Heart right ventricle (tissue), 16 donors: ENCODE measurements at regions of chr7 and their contacts with region 1.

Region 1: GRCh38 chr7:2760098-2760889 is 72.3 kb downstream of the AMZ1 start:
- DNase-seq: peak; percentile 52 to 79
- ATAC-seq: peak; percentile 68 to 86 (median 76)
- H3K4me3 ChIP-seq: peak overlapping the region in 5 of 10 donors; percentile 11 to 27 (median 22)
- H3K27ac ChIP-seq: peak overlapping the region; percentile 52 to 99 (median 91)
- H3K4me1 ChIP-seq: peaks cover 30 to 80% (median 71%) of the 10 kb centered on the region in 9 donors
- H3K27me3 ChIP-seq: no peaks in the 10 kb centered on the region
- CTCF ChIP-seq: peak in 7 of 9 donors; percentile 35 to 65 (median 54)

Region 2: DNA sequence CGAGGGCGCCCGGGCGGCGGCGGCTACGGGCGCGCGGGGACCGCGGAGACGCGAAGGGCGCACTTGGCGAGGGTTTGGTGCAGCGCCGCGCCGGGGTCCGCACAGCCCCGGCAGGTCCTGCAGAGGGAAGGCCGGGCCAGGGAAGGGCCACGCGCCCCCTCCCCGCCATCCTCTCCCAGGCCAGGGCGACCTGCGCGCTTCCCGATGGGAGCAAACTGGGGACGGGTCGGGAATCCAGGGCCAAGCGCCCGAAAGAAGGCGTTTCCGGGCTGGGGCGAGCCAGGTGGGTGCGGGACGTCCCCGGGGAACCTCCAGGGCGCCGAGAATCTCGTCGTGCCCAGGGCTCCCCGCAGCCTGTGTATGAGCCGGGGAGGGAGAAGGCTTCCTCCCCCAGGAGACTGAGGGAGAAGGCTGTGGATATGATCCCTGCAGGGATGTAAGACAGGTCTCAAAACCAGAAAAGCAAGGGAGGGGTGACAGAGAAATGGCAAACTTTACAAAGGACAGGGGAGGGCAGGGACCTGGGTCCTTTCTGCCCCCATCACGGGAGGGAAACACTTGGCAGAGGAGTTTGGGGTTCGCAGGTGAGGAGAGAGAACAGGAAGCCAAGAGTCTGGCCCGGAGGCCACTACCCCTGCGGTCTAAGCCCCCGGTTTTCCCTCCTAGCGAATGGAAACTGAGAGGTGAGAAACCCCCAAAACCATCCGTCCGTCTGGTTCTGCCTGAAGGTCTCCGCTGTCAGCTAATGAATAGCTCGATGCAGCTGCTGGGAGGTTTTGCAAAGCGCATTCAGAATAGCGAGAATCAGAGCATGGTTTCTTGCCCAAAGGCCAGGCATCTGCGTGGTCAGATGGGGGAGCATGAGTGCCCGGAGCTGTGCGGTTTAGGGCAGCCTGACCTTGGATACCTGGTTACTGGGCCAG is 71.6 kb before region 1 on chr7:
- intact Hi-C with region 1: no loop called
- DNase-seq: no peak
- ATAC-seq: peak in 2 of 8 donors; percentile 4 to 23
- H3K4me3 ChIP-seq: peak overlapping the region in 9 of 10 donors; percentile 12 to 45 (median 31)
- H3K27ac ChIP-seq: no peak overlapping the region
- H3K4me1 ChIP-seq: peaks cover 7 to 33% (median 17%) of the 10 kb centered on the region in 9 donors
- H3K27me3 ChIP-seq: peaks cover 0 to 60% (median 52%) of the 10 kb centered on the region in 7 donors
- CTCF ChIP-seq: no peak

Region 3: GRCh38 chr7:2800931-2801688 is 40.8 kb after region 1 on chr7:
- intact Hi-C with region 1: loop called in 5 of 10 experiments (anchors 2 to 5 kb)
- DNase-seq: peak; percentile 55 to 73
- ATAC-seq: peak in 2 of 8 donors; percentile 13 to 19
- H3K4me3 ChIP-seq: no peak overlapping the region
- H3K27ac ChIP-seq: peak overlapping the region in 8 of 10 donors; percentile 47 to 84 (median 77)
- H3K4me1 ChIP-seq: peaks cover 18 to 85% (median 57%) of the 10 kb centered on the region in 9 donors
- H3K27me3 ChIP-seq: no peaks in the 10 kb centered on the region
- CTCF ChIP-seq: no peak

Region 4: DNA sequence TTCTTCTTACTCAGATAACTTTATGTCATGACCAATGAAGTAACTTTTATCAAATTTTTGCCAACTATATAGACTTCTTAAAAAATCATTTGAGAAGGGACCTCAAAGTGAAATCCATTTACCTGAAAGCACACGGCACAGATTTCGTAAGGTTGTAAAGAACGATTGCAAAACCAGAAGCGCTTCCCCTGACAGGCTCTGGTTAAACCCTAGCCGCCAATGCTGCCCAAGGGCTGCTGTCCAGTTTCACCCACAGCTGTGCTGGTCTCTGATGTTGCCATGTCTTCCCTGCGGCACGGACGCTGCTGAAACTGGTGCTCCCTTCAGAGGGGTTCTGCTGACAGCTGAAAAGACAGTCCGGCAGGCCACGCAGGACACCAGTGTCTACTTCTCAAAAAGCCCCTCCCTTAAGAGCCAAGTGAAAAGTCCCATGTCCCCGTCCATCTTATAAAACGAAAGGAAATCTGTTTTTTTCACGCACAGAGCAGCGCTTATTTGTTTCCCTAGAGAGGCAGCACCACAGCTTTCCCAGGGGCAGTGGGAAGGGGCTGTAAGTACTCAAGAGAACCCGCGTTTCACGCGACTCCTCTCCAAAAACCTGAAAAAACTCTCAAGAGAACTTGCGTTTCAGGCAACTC is 51.3 kb after region 1 on chr7:
- intact Hi-C with region 1: loop called in 1 of 10 experiments (anchors 5 kb)
- DNase-seq: peak in 1 of 2 donors; percentile 42
- ATAC-seq: peak; percentile 27 to 54 (median 44)
- H3K4me3 ChIP-seq: peak overlapping the region in 8 of 10 donors; percentile 7 to 41 (median 29)
- H3K27ac ChIP-seq: peak overlapping the region; percentile 50 to 91 (median 77)
- H3K4me1 ChIP-seq: peaks cover 9 to 73% (median 58%) of the 10 kb centered on the region in 9 donors
- H3K27me3 ChIP-seq: no peaks in the 10 kb centered on the region
- CTCF ChIP-seq: no peak

Region 5: GRCh38 chr7:2821161-2821841 is 61.0 kb after region 1 on chr7:
- intact Hi-C with region 1: loop called in 2 of 10 experiments (anchors 5 kb)
- DNase-seq: no peak
- ATAC-seq: peak in 1 of 8 donors; percentile 16
- H3K4me3 ChIP-seq: no peak overlapping the region
- H3K27ac ChIP-seq: peak overlapping the region in 8 of 10 donors; percentile 11 to 73 (median 56)
- H3K4me1 ChIP-seq: peaks cover 19 to 88% (median 75%) of the 10 kb centered on the region in 9 donors
- H3K27me3 ChIP-seq: no peaks in the 10 kb centered on the region
- CTCF ChIP-seq: peak in 1 of 9 donors; percentile 11

Region 6: DNA sequence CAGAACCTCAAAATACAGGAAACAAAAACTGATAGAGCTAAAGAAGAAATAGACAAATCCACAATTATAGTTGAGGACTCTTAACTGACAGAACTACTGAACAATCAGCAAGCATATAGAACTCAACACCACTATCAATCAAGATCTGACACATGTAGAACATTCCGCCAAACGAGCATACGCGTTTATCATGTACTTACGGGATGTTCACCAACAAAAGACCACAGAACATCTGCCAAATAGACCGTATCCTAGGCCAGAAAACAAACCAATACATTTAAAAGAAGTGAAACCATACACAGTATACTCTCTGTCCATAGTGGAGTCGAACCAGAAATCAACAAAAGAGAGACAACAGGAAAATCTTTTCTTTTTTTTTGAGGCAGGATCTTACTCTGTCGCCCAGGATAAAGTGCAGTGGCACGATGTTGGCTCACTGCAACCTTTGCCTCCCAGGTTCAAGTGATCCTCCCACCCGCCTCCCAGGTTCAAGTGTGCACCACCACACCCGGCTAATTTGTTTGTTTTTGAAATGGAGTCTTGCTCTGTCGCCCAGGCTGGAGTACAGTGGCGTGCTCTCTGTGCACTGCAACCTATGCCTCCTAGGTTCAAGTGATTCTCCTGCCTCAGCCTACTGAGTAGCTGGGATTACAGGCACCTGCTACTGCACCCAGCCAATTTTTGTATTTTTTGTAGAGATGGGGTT is 78.7 kb after region 1 on chr7:
- intact Hi-C with region 1: loop called in 5 of 10 experiments (anchors 2 to 10 kb)
- DNase-seq: no peak
- ATAC-seq: no peak
- H3K4me3 ChIP-seq: no peak overlapping the region
- H3K27ac ChIP-seq: peak overlapping the region in 1 of 10 donors; percentile 19
- H3K4me1 ChIP-seq: peaks cover 4 to 67% (median 51%) of the 10 kb centered on the region in 9 donors
- H3K27me3 ChIP-seq: no peaks in the 10 kb centered on the region
- CTCF ChIP-seq: no peak

Region 7: DNA sequence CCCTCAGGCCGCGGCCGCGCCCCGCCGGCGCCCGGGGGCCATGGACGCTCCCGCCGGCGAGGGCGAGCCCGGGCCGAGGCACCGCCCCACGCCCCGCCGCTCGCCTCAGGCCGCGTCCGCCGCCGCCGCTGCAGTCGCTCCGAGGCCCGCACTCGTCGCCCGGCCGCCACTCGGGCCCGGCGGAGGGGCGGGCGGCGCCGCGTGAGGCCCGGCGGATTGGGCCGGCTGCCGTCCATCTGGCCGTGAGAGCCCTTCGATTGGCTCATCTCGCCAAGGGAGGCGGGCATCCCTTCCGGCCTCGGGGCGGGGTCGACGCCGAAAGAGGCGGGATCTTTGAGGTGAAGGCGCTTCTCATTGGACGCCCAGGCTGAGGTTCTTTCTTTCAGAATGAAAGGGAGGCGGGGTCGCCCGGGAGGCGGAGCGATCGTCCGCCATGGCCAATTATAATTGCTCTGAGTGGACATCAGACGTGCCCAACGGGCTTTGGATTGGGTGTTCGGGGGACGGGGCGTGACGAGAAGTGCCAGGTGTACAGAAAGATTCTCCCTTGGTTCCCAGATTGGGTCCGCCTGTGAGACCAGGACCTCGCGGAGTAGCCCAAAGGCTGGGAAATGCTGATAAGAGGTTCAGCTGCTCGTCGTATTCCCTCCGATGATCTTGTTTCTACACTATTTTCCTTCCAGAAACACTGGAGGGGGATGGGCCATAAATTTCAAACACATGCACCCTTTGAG is 84.0 kb after region 1 on chr7 and contains the start of gene GNA12:
- intact Hi-C with region 1: loop called in 5 of 10 experiments (anchors 2 to 10 kb)
- DNase-seq: peak; percentile 98
- ATAC-seq: peak; percentile 96 to 99 (median 98)
- H3K4me3 ChIP-seq: peak within 1 kb of the TSS; percentile 72 to 87 (median 78)
- H3K27ac ChIP-seq: peak within 1 kb of the TSS; percentile 32 to 77 (median 68)
- H3K4me1 ChIP-seq: peaks cover 4 to 49% (median 32%) of the 10 kb centered on the region in 9 donors
- H3K27me3 ChIP-seq: no peaks in the 10 kb centered on the region
- CTCF ChIP-seq: no peak
- total RNA-seq, gene GNA12: 25.0 to 46.4 (median 34.5) TPM

Region 8: DNA sequence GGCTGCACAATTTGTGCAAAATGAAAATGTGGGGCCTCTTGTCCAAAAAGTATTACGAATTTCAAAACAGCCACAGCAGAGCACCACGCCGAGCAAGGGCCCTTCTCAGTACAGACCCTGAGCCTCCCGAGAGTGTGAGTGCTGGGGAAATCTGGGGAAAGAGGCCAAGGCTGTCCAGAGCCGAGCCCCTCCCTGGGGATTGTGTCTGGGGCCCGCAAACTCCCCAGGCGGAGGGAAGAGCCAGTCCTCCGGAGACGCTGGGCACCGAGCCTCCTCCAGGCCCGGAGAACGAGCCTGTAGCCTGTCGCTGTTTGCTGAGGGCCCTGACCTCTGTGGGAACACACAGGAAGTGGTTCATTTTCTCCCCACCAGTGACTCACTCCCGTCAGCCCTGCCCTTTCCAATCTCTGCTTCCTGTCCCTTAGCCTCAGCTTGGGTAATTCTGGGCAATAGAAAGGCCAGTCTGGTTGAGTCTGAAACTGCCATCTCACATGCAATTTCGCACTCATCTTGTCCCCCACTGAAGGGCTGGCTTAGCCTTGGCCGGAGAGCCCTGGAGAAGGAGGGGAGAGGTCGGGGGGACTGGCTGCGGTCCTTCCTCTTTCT is 103.3 kb after region 1 on chr7:
- intact Hi-C with region 1: loop called in 1 of 10 experiments (anchors 5 kb)
- DNase-seq: peak; percentile 81 to 84
- ATAC-seq: peak; percentile 93 to 97 (median 94)
- H3K4me3 ChIP-seq: peak overlapping the region in 6 of 10 donors; percentile 16 to 29 (median 24)
- H3K27ac ChIP-seq: peak overlapping the region; percentile 64 to 96 (median 88)
- H3K4me1 ChIP-seq: peaks cover 0 to 31% (median 20%) of the 10 kb centered on the region in 9 donors
- H3K27me3 ChIP-seq: no peaks in the 10 kb centered on the region
- CTCF ChIP-seq: no peak

Region 9: GRCh38 chr7:2886900-2887299 is 126.6 kb after region 1 on chr7:
- intact Hi-C with region 1: no loop called
- DNase-seq: peak in 1 of 2 donors; percentile 45
- ATAC-seq: peak in 7 of 8 donors; percentile 42 to 82 (median 68)
- H3K4me3 ChIP-seq: no peak overlapping the region
- H3K27ac ChIP-seq: no peak overlapping the region
- H3K4me1 ChIP-seq: no peaks in the 10 kb centered on the region
- H3K27me3 ChIP-seq: peaks cover 0 to 4% (median 0%) of the 10 kb centered on the region in 7 donors
- CTCF ChIP-seq: peak; percentile 20 to 66 (median 55)

Region 10: GRCh38 chr7:3028071-3028757 is 267.9 kb after region 1 on chr7:
- intact Hi-C with region 1: no loop called
- DNase-seq: no peak
- ATAC-seq: peak in 3 of 8 donors; percentile 40 to 73 (median 61)
- H3K4me3 ChIP-seq: no peak overlapping the region
- H3K27ac ChIP-seq: no peak overlapping the region
- H3K4me1 ChIP-seq: peaks cover 0 to 5% (median 0%) of the 10 kb centered on the region in 9 donors
- H3K27me3 ChIP-seq: peaks cover 0 to 28% (median 13%) of the 10 kb centered on the region in 7 donors
- CTCF ChIP-seq: no peak